ENCODE measurements at regions of chr17 and their contacts with region 1.

Region 1: GRCh38 chr17:954431-955164 is 25.0 kb downstream of the NXN start:
- DNase-seq: peak; percentile 90
- ATAC-seq: peak; percentile 89
- H3K4me3 ChIP-seq: peak overlapping the region in 1 of 3 experiments; percentile 37; a peak in 2 of 6 replicates
- H3K27ac ChIP-seq: peak overlapping the region; percentile 43
- H3K4me1 ChIP-seq: peaks cover 33% of the 10 kb centered on the region
- H3K27me3 ChIP-seq: no peaks in the 10 kb centered on the region
- CTCF ChIP-seq: no peak
- EP300 ChIP-seq: 0 out of 4 replicates have a peak, but pooled peaks of 1 of the 2 experiments have one; percentile 32
- POLR2A ChIP-seq: peak in 1 of 2 experiments; percentile 50; a peak in 1 of 4 replicates
- RAD21 ChIP-seq: no peak

Region 2: DNA sequence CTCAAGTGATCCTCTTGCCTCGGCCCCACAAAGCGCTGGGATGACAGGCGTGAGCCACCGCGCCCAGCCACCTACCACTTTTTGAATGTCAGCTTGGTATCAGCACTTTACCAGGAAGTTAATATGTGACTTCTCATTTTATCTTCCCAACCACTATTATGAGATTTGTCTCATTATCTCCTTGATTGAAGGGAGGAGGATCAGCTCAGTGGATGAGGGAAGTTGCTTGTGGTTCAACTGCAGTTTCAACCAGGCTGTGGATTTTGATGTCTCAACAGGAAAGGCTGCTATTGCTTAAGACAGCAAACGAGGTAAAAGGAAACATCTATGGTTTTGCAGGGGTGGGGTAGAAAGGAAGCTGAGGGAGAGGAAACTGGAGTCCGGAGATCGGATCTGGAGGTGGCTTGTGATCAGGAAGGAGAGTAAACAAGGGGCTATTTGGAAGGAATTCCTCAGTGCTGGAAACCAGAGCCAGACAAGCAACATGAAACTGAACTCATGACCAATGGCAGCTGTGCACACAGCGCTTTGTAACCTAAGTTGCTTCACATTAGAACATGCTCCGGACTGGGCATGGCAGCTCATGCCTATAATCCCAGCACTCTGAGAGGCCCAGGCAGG is 420.4 kb before region 1 on chr17:
- CTCF ChIA-PET with region 1: no interaction called
- POLR2A ChIA-PET with region 1: no interaction called
- in situ Hi-C with region 1: no loop called
- intact Hi-C with region 1: no loop called
- DNase-seq: peak; percentile 46
- ATAC-seq: peak; percentile 58
- H3K4me3 ChIP-seq: no peak overlapping the region
- H3K27ac ChIP-seq: peak overlapping the region; percentile 36
- H3K4me1 ChIP-seq: peaks cover 11% of the 10 kb centered on the region
- H3K27me3 ChIP-seq: no peaks in the 10 kb centered on the region
- CTCF ChIP-seq: no peak
- EP300 ChIP-seq: no peak
- POLR2A ChIP-seq: no peak
- RAD21 ChIP-seq: no peak

Region 3: GRCh38 chr17:933312-934083 is 21.1 kb before region 1 on chr17:
- CTCF ChIA-PET with region 1: no interaction called
- POLR2A ChIA-PET with region 1: interaction called, 10 read pairs
- in situ Hi-C with region 1: no loop called
- intact Hi-C with region 1: loop called (anchors 2 kb)
- DNase-seq: peak; percentile 75
- ATAC-seq: no peak
- H3K4me3 ChIP-seq: no peak overlapping the region; a peak in 1 of 6 replicates
- H3K27ac ChIP-seq: no peak overlapping the region
- H3K4me1 ChIP-seq: peaks cover 96% of the 10 kb centered on the region
- H3K27me3 ChIP-seq: no peaks in the 10 kb centered on the region
- CTCF ChIP-seq: no peak
- EP300 ChIP-seq: no peak; a peak in 1 of 4 replicates
- POLR2A ChIP-seq: no peak
- RAD21 ChIP-seq: no peak

Region 4: DNA sequence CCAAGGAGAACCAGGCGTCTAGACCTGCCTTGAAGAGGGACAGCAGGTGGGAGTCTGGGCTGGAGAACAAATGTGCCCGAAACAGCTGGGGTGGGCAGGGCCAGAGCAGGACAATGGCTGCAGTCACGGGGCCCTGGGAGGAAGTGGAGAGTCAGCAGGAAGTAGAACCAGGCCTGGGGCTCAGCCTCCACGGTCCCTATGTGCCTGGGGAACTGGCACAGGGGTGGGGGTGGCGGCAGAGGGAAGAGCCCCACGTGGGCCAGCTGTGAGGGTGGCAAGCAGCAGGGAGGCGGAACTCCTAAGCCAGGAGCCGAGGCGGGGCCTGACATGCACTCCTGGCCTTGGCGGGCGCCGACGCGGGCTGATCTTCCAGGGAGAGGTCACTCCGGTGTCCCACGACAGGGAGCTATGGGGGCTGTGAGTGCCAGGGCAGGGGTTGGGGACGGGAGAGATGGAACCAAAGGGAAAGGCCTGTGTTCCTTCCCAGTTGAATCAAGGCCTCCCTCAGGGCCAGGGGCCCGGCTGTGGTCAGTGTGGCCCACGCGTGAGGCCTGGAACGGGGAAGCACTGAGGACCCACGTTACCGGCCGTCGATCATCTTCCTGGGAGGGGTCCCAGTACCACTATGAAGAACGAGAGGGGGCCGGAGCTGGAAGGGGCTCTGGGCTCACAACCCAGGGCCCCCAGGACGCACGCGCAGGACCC is 85.1 kb after region 1 on chr17:
- CTCF ChIA-PET with region 1: no interaction called
- POLR2A ChIA-PET with region 1: no interaction called
- in situ Hi-C with region 1: no loop called
- intact Hi-C with region 1: no loop called
- DNase-seq: no peak
- ATAC-seq: no peak
- H3K4me3 ChIP-seq: no peak overlapping the region
- H3K27ac ChIP-seq: peak overlapping the region; percentile 40
- H3K4me1 ChIP-seq: peaks cover 19% of the 10 kb centered on the region
- H3K27me3 ChIP-seq: no peaks in the 10 kb centered on the region
- CTCF ChIP-seq: no peak
- EP300 ChIP-seq: no peak
- POLR2A ChIP-seq: no peak
- RAD21 ChIP-seq: no peak

Region 5: DNA sequence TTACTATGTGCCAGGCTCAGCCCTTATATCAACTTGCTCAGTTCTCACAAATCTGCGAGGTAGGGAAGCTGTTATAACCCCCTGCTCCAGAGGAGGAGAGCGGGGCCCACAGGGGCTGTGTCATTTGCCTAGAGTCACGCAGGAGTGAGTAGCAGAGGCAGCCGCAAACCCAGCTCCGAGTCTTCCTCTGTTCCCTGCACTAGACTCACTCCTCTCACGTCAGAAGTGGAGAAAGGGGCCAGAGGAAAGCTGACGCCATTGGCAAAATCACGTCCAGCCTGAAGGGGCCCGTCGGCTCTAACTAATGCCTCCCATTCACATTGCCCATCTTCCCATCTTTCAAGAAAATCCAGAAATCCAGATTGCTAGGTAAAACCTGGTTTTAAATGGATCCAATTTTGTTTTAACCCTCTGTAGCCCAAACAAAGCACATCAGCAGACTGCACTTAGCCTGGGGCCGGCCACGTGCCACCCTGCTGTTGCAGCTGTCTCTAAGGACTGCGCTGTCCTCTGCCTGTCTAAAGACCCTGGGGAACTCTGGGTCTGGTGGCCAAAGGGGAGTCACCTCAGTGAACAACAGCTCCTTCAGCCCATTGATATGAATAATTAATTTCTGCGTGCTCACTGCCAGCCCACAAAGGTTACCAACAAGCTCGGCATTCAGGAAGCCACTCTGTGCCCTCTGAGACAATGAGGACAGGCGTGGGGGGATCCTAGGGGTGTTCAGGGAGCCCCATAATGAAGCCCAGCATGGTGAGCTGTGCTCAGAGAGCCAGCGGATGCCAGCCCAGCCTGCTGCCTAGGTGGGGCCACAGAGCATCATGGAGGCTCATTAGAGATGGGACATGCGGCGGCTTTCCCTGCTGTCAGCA is 261.9 kb after region 1 on chr17:
- CTCF ChIA-PET with region 1: no interaction called
- POLR2A ChIA-PET with region 1: no interaction called
- in situ Hi-C with region 1: no loop called
- intact Hi-C with region 1: no loop called
- DNase-seq: no peak
- ATAC-seq: no peak
- H3K4me3 ChIP-seq: no peak overlapping the region
- H3K27ac ChIP-seq: no peak overlapping the region
- H3K4me1 ChIP-seq: no peaks in the 10 kb centered on the region
- H3K27me3 ChIP-seq: peaks cover 8 to 56% of the 10 kb centered on the region in 2 experiments
- CTCF ChIP-seq: no peak
- EP300 ChIP-seq: no peak
- POLR2A ChIP-seq: no peak
- RAD21 ChIP-seq: no peak